ENCODE measurements at regions of chr11 and their contacts with region 1.

Region 1: DNA sequence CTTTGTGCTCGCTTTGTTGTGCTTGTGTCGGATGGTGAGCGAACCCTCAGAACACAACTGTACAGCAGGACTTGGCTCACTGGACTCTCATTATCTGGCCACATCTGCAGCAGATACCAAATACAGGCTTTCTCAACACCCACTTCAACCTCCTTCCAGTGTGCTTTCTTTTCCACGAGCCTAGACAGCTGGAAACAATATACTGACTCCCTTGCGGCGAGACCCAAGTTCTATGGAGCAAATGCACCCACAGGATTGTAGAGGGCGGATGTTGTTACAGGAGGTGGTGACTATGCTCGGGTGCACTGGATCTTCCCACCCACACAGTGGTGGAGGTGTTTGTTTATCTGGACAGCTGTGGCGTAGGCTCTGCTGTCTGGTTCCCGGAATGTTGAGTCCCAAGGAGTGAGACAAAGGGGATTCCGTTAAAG is 204.3 kb downstream of the TENM4 start:
- DNase-seq: peak; percentile 9

Region 2: GRCh38 chr11:79119491-79120284 is 116.9 kb before region 1 on chr11:
- intact Hi-C with region 1: no loop called
- DNase-seq: no peak

Region 3: GRCh38 chr11:79437278-79437980 is 200.9 kb after region 1 on chr11:
- intact Hi-C with region 1: loop called (anchors 10 kb)
- DNase-seq: no peak

Measured in cardiac septum (tissue), 1 donor.